Heart left ventricle (tissue), 16 donors: ENCODE measurements at regions of chr2 and their contacts with region 1.

Region 1: GRCh38 chr2:47272031-47272864 is 117.1 kb upstream of the STPG4 start:
- DNase-seq: peak; percentile 65 to 86 (median 83)
- ATAC-seq: peak; percentile 70 to 83 (median 79)
- H3K4me3 ChIP-seq: peak overlapping the region; percentile 4 to 60 (median 46)
- H3K27ac ChIP-seq: peak overlapping the region; percentile 15 to 81 (median 72)
- H3K4me1 ChIP-seq: peaks cover 4 to 57% (median 38%) of the 10 kb centered on the region in 12 donors
- H3K27me3 ChIP-seq: no peaks in the 10 kb centered on the region
- CTCF ChIP-seq: peak; percentile 95 to 100 (median 99)
- POLR2A ChIP-seq: no peak

Region 2: DNA sequence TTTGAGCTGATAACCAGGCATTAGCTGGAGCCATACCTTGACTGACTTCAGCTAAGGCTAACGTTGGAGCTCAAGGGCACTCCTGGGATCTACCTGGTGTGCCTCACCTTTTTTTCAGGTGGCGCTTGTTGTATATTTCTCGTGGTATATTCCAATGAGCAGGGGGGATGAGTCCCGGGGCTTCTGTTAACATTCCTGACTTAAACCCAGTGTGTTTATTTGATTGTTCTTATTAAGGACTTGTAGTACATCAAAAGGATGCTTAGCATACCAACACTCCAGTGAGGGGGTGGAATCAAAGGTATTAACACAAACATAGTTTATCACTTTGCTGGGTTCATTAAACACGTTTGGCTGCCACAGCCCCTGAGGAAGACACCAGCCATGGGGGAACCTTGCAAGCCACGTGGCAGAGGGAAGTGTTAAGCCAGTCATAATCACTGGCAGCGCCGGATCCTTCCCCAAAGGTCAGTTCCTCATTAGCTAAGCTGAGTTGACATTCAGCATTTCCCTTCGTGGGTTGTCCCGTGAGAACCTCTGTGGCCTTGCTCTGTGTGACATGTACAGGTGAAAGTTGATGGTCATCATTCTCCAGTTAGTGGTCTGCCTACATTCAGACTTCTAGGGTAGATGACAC is 237.2 kb before region 1 on chr2:
- intact Hi-C with region 1: loop called in 1 of 10 experiments (anchors 5 kb)
- DNase-seq: peak in 4 of 5 donors; percentile 59 to 77 (median 71)
- ATAC-seq: peak in 3 of 4 donors; percentile 8 to 20 (median 15)
- H3K4me3 ChIP-seq: no peak overlapping the region
- H3K27ac ChIP-seq: peak overlapping the region; percentile 72 to 98 (median 94)
- H3K4me1 ChIP-seq: peaks cover 17 to 88% (median 59%) of the 10 kb centered on the region in 12 donors
- H3K27me3 ChIP-seq: no peaks in the 10 kb centered on the region
- CTCF ChIP-seq: no peak
- POLR2A ChIP-seq: no peak

Region 3: DNA sequence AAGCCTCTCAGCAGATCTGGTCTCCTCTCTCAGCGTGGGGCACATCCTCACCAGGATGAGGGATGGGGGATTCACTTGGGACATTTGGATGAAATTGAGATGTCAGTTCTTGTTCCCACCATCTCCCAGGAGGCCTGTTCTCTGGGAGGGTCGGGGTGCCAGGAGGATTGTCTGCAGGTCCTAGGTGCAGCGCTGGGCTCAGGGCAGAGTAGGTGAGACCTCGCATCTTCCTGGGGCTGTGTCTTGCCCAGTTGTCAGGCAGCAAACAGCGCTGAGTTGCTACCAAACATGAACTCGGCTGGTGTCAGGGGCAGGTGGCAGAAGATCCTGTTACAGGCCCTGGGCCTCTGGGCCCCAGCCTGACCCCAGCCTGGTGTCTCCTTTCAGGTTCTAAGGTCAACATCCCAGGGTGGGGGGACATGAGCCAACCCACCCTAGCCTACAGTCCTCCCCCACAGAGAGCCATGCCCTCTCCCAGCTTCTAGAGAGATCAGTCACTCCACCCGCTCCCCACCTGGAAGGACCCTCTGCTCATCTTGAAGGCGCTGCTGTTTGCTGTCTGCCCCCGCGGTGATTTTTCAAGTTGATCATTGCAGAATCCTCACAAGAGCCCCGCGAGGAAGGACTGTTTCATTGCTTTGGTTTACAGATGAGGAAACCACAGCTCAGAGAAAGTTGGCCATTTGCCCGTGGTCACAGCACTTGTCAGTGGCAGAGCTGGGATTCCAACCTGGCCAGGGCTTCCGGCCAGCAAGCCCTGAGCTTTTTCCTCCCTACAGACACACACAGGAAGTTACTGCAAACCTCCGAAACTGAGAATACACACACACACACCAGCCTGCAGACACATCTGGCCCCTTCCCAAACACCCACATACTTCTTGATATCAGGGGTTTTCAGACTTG is 201.1 kb before region 1 on chr2:
- intact Hi-C with region 1: loop called in 1 of 10 experiments (anchors 5 kb)
- DNase-seq: peak; percentile 84 to 92 (median 87)
- ATAC-seq: peak; percentile 11 to 46 (median 34)
- H3K4me3 ChIP-seq: peak overlapping the region in 3 of 12 donors; percentile 3 to 13 (median 12)
- H3K27ac ChIP-seq: peak overlapping the region; percentile 75 to 99 (median 94)
- H3K4me1 ChIP-seq: peaks cover 30 to 96% (median 77%) of the 10 kb centered on the region in 12 donors
- H3K27me3 ChIP-seq: no peaks in the 10 kb centered on the region
- CTCF ChIP-seq: no peak
- POLR2A ChIP-seq: no peak

Region 4: GRCh38 chr2:47165001-47165555 is 107.2 kb before region 1 on chr2:
- intact Hi-C with region 1: no loop called
- DNase-seq: no peak
- ATAC-seq: no peak
- H3K4me3 ChIP-seq: no peak overlapping the region
- H3K27ac ChIP-seq: peak overlapping the region in 1 of 12 donors; percentile 1
- H3K4me1 ChIP-seq: peaks cover 0 to 65% (median 42%) of the 10 kb centered on the region in 12 donors
- H3K27me3 ChIP-seq: no peaks in the 10 kb centered on the region
- CTCF ChIP-seq: no peak
- POLR2A ChIP-seq: no peak

Region 5: DNA sequence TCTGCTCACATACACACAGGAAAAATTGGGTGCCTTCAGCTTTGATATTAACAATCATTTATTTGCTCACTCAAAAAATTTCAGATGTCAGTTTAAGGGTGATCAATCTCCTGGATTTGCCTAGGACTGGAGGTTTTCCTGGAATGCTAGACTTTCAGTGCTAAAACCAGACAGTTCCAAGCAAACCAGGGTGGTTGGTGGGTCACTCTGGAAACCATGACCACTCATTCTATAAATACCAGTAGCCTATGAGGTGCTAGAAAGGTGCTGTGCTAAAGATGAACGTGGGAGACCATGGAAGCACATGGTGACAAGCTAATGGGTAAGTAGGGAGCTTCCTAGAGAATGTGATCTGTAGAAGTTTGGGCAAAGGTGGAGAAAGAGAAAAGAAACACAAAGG is 91.7 kb before region 1 on chr2:
- intact Hi-C with region 1: loop called in 1 of 10 experiments (anchors 5 kb)
- DNase-seq: no peak
- ATAC-seq: no peak
- H3K4me3 ChIP-seq: no peak overlapping the region
- H3K27ac ChIP-seq: no peak overlapping the region
- H3K4me1 ChIP-seq: peaks cover 0 to 8% (median 2%) of the 10 kb centered on the region in 12 donors
- H3K27me3 ChIP-seq: no peaks in the 10 kb centered on the region
- CTCF ChIP-seq: no peak
- POLR2A ChIP-seq: no peak

Region 6: DNA sequence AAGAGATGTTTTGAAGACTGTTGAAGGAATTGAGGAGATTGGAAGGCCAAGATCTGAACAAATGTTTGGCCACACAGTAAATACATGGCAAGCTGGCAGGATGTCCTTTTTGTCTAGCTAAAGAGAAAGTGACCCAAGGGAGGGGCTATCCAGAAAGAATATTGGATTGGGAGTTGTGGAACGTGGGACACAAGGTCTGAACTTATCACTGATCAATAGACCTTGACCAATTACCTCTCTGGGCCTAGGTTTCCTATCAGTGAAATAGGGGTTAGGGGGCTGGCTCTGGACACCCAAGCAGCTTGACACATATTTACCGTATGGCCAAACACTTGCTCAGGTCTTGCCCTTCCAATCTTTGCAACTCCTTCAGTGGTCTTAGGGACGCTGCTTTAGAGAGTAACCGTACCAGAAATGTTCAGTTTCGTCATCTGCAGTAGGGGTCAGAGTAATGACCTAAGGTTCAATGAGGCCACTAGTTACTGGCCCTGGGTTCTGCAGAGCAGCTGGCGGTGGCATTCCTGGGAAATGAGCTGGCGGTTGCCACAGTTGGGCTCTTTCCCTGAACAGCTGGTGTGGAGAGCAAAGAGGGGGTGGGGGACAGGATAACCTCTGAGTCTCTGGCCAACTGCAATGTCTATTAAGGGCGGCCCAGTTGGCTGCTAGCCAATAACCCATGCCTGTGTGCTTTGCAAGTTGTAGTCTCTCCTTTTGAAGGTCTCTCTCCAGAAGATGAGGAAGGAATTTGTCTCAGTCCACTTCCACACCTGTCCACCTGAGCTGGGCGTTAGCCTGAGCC is 47.0 kb before region 1 on chr2:
- intact Hi-C with region 1: loop called in 1 of 10 experiments (anchors 5 kb)
- DNase-seq: peak; percentile 75 to 91 (median 87)
- ATAC-seq: peak; percentile 83 to 96 (median 92)
- H3K4me3 ChIP-seq: no peak overlapping the region
- H3K27ac ChIP-seq: peak overlapping the region in 3 of 12 donors; percentile 28 to 53 (median 29)
- H3K4me1 ChIP-seq: peaks cover 3 to 31% (median 18%) of the 10 kb centered on the region in 12 donors
- H3K27me3 ChIP-seq: no peaks in the 10 kb centered on the region
- CTCF ChIP-seq: no peak
- POLR2A ChIP-seq: no peak

Region 7: GRCh38 chr2:47309952-47310800 is 37.9 kb after region 1 on chr2:
- intact Hi-C with region 1: loop called in 3 of 10 experiments (anchors 2 to 5 kb)
- DNase-seq: peak in 3 of 5 donors; percentile 30 to 43 (median 40)
- ATAC-seq: peak; percentile 56 to 63 (median 60)
- H3K4me3 ChIP-seq: no peak overlapping the region
- H3K27ac ChIP-seq: peak overlapping the region; percentile 19 to 78 (median 73)
- H3K4me1 ChIP-seq: peaks cover 3 to 42% (median 21%) of the 10 kb centered on the region in 12 donors
- H3K27me3 ChIP-seq: no peaks in the 10 kb centered on the region
- CTCF ChIP-seq: no peak
- POLR2A ChIP-seq: no peak

Region 8: DNA sequence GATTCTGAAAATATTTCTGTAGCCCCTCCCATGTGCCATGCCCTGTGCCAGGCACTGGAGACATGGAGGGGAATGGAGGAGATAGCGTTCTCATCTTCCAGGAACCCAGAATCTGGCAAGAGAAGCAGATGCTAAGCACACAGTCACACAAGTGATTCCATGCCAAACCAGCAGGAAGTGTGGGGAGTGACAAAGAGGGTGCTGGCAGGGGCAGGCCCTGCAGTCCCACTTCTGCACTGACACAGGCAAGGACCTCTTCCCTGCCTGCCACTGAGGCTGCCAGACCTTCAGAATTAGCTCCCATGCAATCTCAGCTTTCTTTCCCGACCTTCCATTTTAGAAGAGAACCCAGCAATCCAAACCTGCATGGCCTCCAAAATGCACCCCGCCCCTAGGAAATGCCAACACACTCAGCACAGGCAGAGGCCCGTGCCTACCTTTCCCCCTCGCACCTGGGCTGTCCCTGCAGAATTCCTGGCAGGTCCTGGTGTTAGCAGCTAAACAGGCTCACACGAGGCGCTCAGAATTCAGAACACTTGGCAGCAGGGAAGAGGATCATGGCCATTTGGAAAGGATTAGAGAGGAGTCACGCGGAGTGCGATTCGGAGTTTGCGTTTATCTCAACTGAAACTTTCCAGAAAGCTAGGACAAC is 286.0 kb after region 1 on chr2:
- intact Hi-C with region 1: no loop called
- DNase-seq: peak in 2 of 5 donors; percentile 41 to 55
- ATAC-seq: peak; percentile 50 to 73 (median 68)
- H3K4me3 ChIP-seq: no peak overlapping the region
- H3K27ac ChIP-seq: peak overlapping the region in 6 of 12 donors; percentile 14 to 74 (median 50)
- H3K4me1 ChIP-seq: peaks cover 0 to 29% (median 5%) of the 10 kb centered on the region in 12 donors
- H3K27me3 ChIP-seq: peaks cover 0 to 3% (median 0%) of the 10 kb centered on the region in 9 donors
- CTCF ChIP-seq: no peak
- POLR2A ChIP-seq: no peak